Calu3 (cell line): ENCODE measurements at regions of chr22 and their contacts with region 1.

Region 1: DNA sequence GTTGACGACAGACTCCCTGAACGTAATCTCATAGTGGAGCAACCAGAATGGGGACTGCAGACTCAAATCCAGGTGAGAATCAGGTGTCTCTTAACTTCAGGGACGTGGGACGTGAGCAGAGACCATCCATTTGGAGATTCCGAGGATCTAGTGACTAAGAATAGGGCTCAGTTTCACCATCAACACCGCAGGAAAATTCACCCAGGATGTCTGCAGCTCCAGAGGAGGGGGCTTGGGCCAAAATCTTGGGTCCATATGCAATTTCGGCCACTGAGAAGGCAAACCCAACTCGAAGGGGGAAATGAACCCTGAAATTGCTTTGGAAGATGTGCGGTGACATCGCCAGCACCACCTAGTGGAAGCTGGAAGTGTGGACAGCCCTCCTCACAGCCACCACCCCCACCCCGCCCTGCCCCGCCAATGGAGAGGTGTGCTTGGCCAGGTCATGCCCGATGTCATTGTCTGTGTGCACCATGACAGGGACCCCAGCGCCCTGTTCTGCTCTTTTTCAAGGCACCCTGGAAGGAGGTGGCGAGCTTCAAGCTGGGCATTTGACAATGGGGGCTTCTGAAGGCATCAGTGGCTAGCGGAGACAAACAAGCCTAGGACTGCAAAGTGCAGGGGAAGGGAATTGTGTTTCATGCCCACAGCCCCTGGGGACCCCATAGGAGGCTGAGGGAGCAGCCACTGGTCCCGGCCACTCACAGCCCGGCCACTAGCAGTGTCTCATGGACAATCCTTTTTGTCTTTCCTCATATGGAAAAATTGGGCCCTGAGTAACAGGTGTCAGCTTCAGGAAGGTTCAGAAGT is 24.8 kb downstream of the APOL1 start:
- DNase-seq: peak; percentile 64
- H3K4me3 Mint-ChIP-seq: no peak overlapping the region
- H3K27ac Mint-ChIP-seq: peak overlapping the region; percentile 54
- H3K4me1 Mint-ChIP-seq: no peaks in the 10 kb centered on the region
- H3K27me3 Mint-ChIP-seq: no peaks in the 10 kb centered on the region
- CTCF ChIP-seq: peak; percentile 74

Region 2: DNA sequence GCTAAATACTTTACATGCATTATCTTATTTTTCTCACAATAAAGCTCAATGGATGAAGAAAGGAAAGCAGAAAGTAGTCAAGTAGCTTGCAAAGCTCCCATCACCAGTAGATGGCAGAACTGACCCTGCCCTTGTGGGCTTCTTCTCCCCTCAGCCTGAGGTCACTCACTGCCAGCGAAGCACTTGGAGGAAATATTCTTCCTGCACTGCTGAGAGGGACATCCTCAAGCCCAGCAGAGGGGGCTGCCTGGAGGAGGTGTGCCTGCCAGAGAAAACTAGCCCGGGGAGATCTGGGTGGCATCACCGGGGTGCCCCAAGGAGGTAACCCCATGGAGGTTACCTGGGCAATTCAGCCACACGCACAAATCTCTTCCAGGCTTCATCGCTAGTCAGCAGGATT is 82.7 kb before region 1 on chr22:
- CTCF ChIA-PET with region 1: interaction called, 8 read pairs
- intact Hi-C with region 1: loop called (anchors 1 kb)
- DNase-seq: peak; percentile 63
- H3K4me3 Mint-ChIP-seq: no peak overlapping the region
- H3K27ac Mint-ChIP-seq: no peak overlapping the region
- H3K4me1 Mint-ChIP-seq: peaks cover 10% of the 10 kb centered on the region
- H3K27me3 Mint-ChIP-seq: peaks cover 44% of the 10 kb centered on the region
- CTCF ChIP-seq: peak; percentile 66

Region 3: DNA sequence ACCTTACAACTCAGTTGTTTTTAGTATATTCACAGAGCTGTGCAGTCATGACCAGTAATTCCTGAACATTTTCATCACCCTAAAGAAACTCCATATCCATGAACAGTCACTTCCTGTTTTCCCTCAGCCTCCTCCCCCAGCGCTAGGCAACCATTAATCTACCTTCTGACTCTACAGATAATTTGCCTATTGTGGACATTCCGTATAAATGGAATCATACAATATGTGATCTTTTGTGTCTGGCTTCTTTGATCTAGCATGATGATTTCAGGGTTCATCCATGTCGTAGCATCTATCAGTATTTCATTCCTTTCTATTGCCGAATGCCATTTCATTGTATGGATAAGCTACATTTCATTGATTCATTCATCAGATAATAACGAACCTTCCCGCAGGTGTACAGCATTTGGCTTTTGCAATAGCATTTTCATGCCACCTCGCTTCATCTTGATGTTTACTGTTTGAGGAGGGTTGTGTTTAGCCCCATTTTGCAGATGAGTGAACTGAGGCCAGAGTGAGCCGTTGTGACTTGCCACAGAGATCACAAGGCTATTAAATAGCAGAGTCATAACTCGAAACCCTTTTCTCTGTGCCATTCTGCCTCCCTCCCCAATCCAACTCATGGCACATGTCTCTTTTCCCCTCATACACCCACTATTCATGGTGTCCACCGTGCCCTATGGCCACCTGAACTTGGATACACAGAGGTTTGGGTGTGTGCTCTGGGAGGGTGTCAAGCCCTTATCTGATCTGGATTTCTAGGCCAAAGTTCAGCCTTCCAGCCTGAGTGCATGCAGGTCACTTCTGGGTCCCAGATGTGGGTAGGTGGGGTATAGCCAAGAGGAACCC is 121.2 kb after region 1 on chr22:
- CTCF ChIA-PET with region 1: no interaction called
- intact Hi-C with region 1: no loop called
- DNase-seq: peak; percentile 44
- H3K4me3 Mint-ChIP-seq: peak overlapping the region; percentile 38
- H3K27ac Mint-ChIP-seq: peak overlapping the region; percentile 92
- H3K4me1 Mint-ChIP-seq: peaks cover 57% of the 10 kb centered on the region
- H3K27me3 Mint-ChIP-seq: no peaks in the 10 kb centered on the region
- CTCF ChIP-seq: no peak